Adrenal gland (tissue), 19 donors: ENCODE measurements at regions of chr6 and their contacts with region 1.

Region 1: DNA sequence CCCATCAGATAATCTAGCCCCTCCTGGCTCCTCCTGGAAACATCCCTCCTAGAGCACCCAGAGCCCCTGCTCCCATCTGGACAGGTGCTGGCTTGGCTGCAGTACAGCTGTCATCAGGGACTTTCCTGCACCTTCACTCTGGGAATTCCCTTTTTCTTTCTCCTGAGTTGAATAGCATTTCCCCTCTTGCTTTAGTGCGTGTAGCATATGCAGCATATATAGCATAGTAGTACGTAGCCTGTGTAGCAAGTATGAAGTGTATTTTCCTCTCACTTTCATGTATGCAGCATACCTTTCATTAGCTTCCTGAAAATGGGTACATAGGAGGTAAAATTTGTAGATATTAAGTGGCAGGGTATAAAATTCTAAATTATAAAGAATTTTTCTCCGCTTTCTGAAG is 352.9 kb downstream of the ESR1 start:
- DNase-seq: no peak
- H3K4me3 ChIP-seq: no peak overlapping the region
- H3K27ac ChIP-seq: no peak overlapping the region
- H3K4me1 ChIP-seq: no peaks in the 10 kb centered on the region
- H3K27me3 ChIP-seq: no peaks in the 10 kb centered on the region
- CTCF ChIP-seq: no peak
- POLR2A ChIP-seq: no peak

Region 2: DNA sequence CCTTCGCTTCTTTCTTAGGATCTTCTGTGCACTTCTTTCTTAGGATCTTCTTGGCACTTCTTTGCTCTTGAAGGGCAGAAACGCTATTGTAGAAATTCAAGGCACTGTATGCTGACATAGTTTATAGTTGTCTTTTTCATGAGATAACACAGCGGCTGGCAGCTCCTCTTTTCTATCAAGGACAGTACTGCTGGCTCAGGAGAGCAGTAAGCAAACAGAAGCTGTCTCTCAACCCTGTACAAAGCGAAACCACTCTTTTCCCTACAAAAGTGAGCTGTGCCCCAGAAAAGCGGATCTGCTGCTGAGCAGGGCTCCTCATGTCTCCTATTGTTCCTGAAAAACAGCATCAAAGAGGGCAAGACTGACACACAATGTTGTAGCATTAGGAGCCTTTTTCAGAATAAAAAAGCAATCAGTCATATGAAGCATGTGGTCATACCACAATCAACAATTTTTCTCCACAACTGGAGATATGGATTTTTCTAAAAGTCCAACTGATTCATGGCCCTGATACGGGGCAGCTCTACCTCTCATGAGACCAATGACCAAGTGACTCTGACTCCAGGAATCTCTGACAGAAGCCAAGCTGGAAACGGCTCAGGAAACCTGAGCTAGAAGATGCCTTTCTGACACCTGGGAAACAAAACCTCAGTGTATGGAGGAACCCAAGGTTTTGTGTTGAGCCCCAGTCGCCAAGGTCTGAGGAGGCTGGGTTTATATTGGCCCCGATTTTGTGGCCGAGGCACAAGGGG is 97.0 kb before region 1 on chr6:
- intact Hi-C with region 1: no loop called
- DNase-seq: peak; percentile 43 to 82 (median 70)
- H3K4me3 ChIP-seq: peak overlapping the region in 1 of 4 donors; percentile 2
- H3K27ac ChIP-seq: peak overlapping the region in 4 of 5 donors; percentile 60 to 83 (median 68)
- H3K4me1 ChIP-seq: peaks cover 4 to 13% of the 10 kb centered on the region in 2 donors
- H3K27me3 ChIP-seq: no peaks in the 10 kb centered on the region
- CTCF ChIP-seq: no peak
- POLR2A ChIP-seq: peak in 1 of 2 donors; percentile 71

Region 3: GRCh38 chr6:152078804-152079203 is 81.5 kb before region 1 on chr6:
- intact Hi-C with region 1: no loop called
- DNase-seq: no peak
- H3K4me3 ChIP-seq: no peak overlapping the region
- H3K27ac ChIP-seq: no peak overlapping the region
- H3K4me1 ChIP-seq: no peaks in the 10 kb centered on the region
- H3K27me3 ChIP-seq: no peaks in the 10 kb centered on the region
- CTCF ChIP-seq: no peak
- POLR2A ChIP-seq: no peak

Region 4: DNA sequence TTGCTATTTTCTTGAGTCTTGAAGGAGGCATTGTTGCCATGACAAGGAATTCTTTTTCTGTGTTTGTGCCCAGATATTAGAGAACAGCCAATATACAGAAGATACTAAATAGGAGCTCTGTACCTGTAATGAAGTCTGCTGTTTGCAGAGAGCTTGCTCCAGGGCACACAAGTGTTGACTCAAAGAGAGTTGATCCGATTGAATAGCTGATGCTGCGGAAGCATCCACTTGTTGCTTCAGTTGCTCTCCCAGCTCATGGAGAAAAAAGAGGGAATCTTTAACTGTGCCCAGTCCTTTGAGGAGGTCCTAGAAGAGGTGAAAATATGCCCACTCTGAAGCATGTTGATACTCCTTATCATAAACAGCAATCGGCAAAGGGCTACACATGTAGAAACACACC is 58.5 kb after region 1 on chr6:
- intact Hi-C with region 1: loop called in 1 of 2 experiments (anchors 10 kb)
- DNase-seq: no peak
- H3K4me3 ChIP-seq: no peak overlapping the region
- H3K27ac ChIP-seq: no peak overlapping the region
- H3K4me1 ChIP-seq: no peaks in the 10 kb centered on the region
- H3K27me3 ChIP-seq: no peaks in the 10 kb centered on the region
- CTCF ChIP-seq: no peak
- POLR2A ChIP-seq: no peak

Region 5: DNA sequence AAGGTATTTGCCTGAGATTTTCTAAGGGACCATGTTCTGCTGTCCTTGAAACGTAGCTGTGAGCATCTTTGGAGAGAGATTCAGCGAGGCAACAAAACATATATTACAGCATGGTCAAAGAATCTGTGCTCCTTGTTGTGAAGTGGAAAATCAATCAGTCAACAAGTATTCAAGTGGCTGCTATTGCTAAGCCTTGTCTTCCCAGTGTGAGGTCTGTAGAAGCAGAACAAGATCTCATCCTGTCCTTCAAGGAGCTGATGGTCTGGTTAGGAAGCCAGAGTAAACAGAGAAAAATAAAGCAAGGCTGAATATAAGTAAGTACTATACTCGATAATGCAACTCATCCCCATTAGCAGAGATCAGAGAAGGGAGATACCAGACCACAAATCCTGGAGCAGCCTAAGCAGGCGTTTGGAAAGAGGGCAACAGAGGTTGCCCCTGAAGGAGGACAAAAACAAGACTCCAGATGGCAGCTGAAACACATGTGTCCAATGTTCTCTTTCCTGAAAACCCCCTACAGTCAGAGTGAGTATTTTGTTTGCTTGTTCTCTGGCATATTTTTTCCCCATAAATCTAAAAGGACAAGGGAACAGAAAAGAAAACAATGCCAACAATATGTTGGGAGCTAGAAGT is 84.8 kb after region 1 on chr6:
- intact Hi-C with region 1: no loop called
- DNase-seq: no peak
- H3K4me3 ChIP-seq: no peak overlapping the region
- H3K27ac ChIP-seq: peak overlapping the region in 2 of 5 donors; percentile 36 to 56
- H3K4me1 ChIP-seq: peaks cover 19 to 40% of the 10 kb centered on the region in 2 donors
- H3K27me3 ChIP-seq: no peaks in the 10 kb centered on the region
- CTCF ChIP-seq: no peak
- POLR2A ChIP-seq: no peak

Region 6: DNA sequence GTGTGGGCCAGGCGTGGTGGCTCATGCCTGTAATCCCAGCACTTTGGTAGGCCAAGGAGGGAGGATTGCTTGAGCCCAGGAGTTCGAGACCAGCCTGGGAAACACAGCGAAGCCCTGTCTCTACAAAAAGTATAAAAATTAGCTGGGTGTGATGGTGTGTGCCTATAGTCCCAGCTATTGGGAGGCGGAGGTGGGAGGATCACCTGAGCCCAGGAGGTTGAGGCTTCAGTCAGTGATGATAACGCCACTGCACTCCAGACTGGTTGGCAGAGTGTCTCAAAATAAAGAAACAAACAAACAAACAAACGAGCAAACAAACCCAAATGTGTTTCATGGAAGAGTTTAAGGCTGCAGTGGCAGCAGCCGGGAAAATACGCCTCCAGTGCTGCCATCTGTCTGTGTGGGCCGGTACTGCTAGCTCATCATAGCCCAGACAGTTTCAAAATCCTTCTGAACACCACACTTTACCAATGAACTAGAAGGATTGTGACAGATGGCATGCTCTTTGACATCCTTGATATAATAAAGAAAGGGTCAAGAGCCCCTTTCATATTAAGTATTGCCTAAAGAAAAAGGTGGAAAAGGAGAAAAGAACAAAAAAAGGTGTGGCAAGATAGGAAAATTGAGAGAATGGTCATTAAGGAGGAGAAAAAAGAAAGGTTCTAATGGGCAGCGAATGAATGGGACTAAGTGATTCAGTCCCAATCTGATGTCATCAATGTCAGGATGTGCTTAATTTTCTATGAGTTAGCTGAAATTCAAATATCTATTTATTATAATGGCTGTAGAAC is 178.2 kb after region 1 on chr6:
- intact Hi-C with region 1: no loop called
- DNase-seq: peak; percentile 26 to 81 (median 54)
- H3K4me3 ChIP-seq: no peak overlapping the region
- H3K27ac ChIP-seq: no peak overlapping the region
- H3K4me1 ChIP-seq: no peaks in the 10 kb centered on the region
- H3K27me3 ChIP-seq: no peaks in the 10 kb centered on the region
- CTCF ChIP-seq: peak; percentile 56 to 84 (median 77)
- POLR2A ChIP-seq: no peak